ENCODE measurements at regions of chr5 and their contacts with region 1.

Region 1: GRCh38 chr5:41843456-41844370 is 26.5 kb downstream of the OXCT1 start:
- DNase-seq: no peak
- ATAC-seq: peak; percentile 85

Region 2: GRCh38 chr5:41270423-41271251 is 573.1 kb before region 1 on chr5:
- intact Hi-C with region 1: loop called in 1 of 2 experiments (anchors 5 kb)
- DNase-seq: peak in 1 of 2 donors; percentile 19
- ATAC-seq: peak; percentile 92

Region 3: DNA sequence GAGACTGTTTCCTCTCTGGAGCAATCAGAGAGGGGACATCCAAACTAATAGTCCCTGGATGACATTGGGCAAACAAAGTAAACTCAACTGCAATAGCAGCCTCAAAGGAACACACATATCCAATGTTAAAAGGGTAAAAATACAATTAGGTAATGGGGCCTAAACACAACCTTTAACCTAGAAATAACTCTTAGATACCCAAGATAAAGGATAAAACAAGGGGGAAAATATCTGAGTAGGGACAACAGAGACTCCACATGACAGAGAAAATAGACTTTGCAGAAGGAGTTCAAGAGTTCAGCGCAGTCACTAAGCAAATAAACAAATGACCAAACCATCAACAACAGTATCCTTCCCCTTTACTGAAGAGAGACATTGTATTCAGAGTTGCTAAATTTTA is 230.6 kb after region 1 on chr5:
- intact Hi-C with region 1: no loop called
- DNase-seq: no peak
- ATAC-seq: no peak